ENCODE measurements at regions of chr17 and their contacts with region 1.

Region 1: GRCh38 chr17:63773381-63774140 is at the start of gene CCDC47:
- DNase-seq: peak; percentile 94 to 100 (median 98)
- ATAC-seq: peak; percentile 80
- H3K4me3 ChIP-seq: peak within 1 kb of the TSS; percentile 67
- H3K4me3 Mint-ChIP-seq: peak within 1 kb of the TSS; percentile 99
- H3K27ac ChIP-seq: peak within 1 kb of the TSS; percentile 94 to 98
- H3K27ac Mint-ChIP-seq: peak within 1 kb of the TSS; percentile 97
- H3K4me1 ChIP-seq: peaks cover 58% of the 10 kb centered on the region
- H3K4me1 Mint-ChIP-seq: peaks cover 71% of the 10 kb centered on the region
- H3K27me3 ChIP-seq: no peaks in the 10 kb centered on the region
- H3K27me3 Mint-ChIP-seq: no peaks in the 10 kb centered on the region
- CTCF ChIP-seq: no peak
- total RNA-seq, gene CCDC47: 31.0 to 31.3 TPM

Region 2: GRCh38 chr17:63707151-63707550 is 66.4 kb before region 1 on chr17:
- CTCF ChIA-PET with region 1: interaction called, 7 read pairs
- POLR2A ChIA-PET with region 1: interaction called, 276 read pairs
- intact Hi-C with region 1: loop called in 1 of 2 experiments (anchors 2 kb)
- DNase-seq: peak in 6 of 14 experiments; percentile 28 to 79 (median 54)
- ATAC-seq: peak; percentile 57
- H3K4me3 ChIP-seq: peak overlapping the region; percentile 39
- H3K4me3 Mint-ChIP-seq: peak overlapping the region; percentile 75
- H3K27ac ChIP-seq: peak overlapping the region; percentile 69 to 70
- H3K27ac Mint-ChIP-seq: peak overlapping the region; percentile 100
- H3K4me1 ChIP-seq: peaks cover 86% of the 10 kb centered on the region
- H3K4me1 Mint-ChIP-seq: peaks cover 83% of the 10 kb centered on the region
- H3K27me3 ChIP-seq: no peaks in the 10 kb centered on the region
- H3K27me3 Mint-ChIP-seq: no peaks in the 10 kb centered on the region
- CTCF ChIP-seq: no peak

Region 3: DNA sequence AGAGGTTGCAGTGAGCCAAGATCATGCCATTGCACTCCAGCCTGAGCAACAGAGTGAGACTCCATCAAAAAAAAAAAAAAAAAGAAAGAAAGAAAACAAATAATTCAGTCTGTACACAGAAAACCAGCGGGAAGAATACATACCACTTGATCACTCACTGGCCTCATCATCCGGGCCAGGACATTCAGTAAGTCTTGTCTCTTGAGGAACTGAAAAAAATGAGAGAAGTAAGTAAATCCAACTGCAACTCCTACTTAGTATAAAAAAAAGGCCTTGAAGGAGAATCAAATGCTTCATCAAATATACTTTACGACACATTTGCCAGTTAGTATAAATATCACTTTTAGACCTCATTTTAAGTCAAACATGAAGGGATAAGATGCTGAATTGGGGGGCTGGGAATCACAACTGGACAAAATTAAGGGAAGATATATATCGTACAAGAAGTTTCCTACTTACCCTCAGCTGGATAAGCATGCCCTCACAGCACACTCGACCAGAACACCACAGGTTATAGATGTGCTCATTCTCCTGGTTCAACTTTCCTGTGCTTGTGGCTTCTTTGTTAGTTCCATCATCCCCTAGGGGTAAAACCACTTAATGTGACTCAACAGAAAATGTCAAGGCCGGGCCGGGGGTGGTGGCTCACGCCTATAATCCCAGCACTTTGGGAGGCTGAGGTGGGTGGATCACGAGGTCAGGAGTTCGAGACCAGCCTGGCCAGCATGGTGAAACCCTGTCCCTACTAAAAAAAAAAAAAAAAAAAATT is 12.6 kb before region 1 on chr17:
- CTCF ChIA-PET with region 1: interaction called, 5 read pairs
- POLR2A ChIA-PET with region 1: interaction called, 29 read pairs
- intact Hi-C with region 1: no loop called
- DNase-seq: no peak
- ATAC-seq: no peak
- H3K4me3 ChIP-seq: no peak overlapping the region
- H3K4me3 Mint-ChIP-seq: no peak overlapping the region
- H3K27ac ChIP-seq: no peak overlapping the region
- H3K27ac Mint-ChIP-seq: no peak overlapping the region
- H3K4me1 ChIP-seq: no peaks in the 10 kb centered on the region
- H3K4me1 Mint-ChIP-seq: peaks cover 17% of the 10 kb centered on the region
- H3K27me3 ChIP-seq: no peaks in the 10 kb centered on the region
- H3K27me3 Mint-ChIP-seq: no peaks in the 10 kb centered on the region
- CTCF ChIP-seq: no peak

Region 4: GRCh38 chr17:63842540-63843386 is 69.2 kb after region 1 on chr17 and contains the start of gene SMARCD2:
- CTCF ChIA-PET with region 1: no interaction called
- POLR2A ChIA-PET with region 1: interaction called, 45 read pairs
- intact Hi-C with region 1: loop called (anchors 1 to 2 kb)
- DNase-seq: peak; percentile 98 to 100 (median 99)
- ATAC-seq: peak; percentile 88
- H3K4me3 ChIP-seq: peak within 1 kb of the TSS; percentile 85
- H3K4me3 Mint-ChIP-seq: peak within 1 kb of the TSS; percentile 94
- H3K27ac ChIP-seq: peak within 1 kb of the TSS; percentile 85 to 93
- H3K27ac Mint-ChIP-seq: peak within 1 kb of the TSS; percentile 91
- H3K4me1 ChIP-seq: peaks cover 57% of the 10 kb centered on the region
- H3K4me1 Mint-ChIP-seq: peaks cover 50% of the 10 kb centered on the region
- H3K27me3 ChIP-seq: no peaks in the 10 kb centered on the region
- H3K27me3 Mint-ChIP-seq: no peaks in the 10 kb centered on the region
- CTCF ChIP-seq: no peak
- total RNA-seq, gene SMARCD2: 102 to 111 TPM